Activated CD4-positive, alpha-beta T cell treated with anti-CD3 and anti-CD28 coated beads, Interleukin-2, amount 10 ng/mL, durations not matched to agents 24 days and 14 days (primary cell): ENCODE measurements at regions of chr5 and their contacts with region 1.

Region 1: DNA sequence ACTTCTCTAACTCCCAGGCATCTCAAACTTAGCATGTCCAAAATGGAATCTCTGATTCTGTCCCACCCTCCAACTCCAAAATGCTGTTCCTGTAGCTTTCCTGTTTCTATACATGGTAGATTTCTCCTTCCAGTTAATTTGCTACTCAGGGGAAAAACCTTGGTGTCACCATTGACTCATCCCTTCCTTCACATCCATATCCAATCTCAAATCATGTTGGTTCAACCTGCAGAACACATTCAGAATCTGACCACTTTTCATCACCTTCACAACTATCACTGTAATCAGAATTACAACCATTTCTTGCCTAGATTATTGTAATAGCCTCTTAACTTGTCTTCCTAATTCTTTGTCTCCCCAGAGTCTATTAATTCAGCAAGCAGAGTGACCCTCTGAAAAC is 10.8 kb downstream of the RIOK2 start:
- DNase-seq: no peak
- H3K4me3 Mint-ChIP-seq: no peak overlapping the region
- H3K27ac Mint-ChIP-seq: no peak overlapping the region
- H3K4me1 Mint-ChIP-seq: peaks cover 14% of the 10 kb centered on the region
- H3K27me3 Mint-ChIP-seq: no peaks in the 10 kb centered on the region

Region 2: GRCh38 chr5:96973532-96974401 is 198.5 kb before region 1 on chr5:
- intact Hi-C with region 1: no loop called
- DNase-seq: no peak
- H3K4me3 Mint-ChIP-seq: peak overlapping the region; percentile 7
- H3K27ac Mint-ChIP-seq: peak overlapping the region; percentile 68
- H3K4me1 Mint-ChIP-seq: peaks cover 40% of the 10 kb centered on the region
- H3K27me3 Mint-ChIP-seq: no peaks in the 10 kb centered on the region

Region 3: GRCh38 chr5:97183100-97183929 is 11.1 kb after region 1 on chr5 and contains the start of gene RIOK2:
- intact Hi-C with region 1: loop called (anchors 1 kb)
- DNase-seq: peak; percentile 97
- H3K4me3 Mint-ChIP-seq: peak within 1 kb of the TSS; percentile 89
- H3K27ac Mint-ChIP-seq: peak within 1 kb of the TSS; percentile 100
- H3K4me1 Mint-ChIP-seq: peaks cover 24% of the 10 kb centered on the region
- H3K27me3 Mint-ChIP-seq: peaks cover 4% of the 10 kb centered on the region
- total RNA-seq, gene RIOK2: 40.8 and 42.0 TPM in 2 replicates

Region 4: GRCh38 chr5:98428806-98429205 is 1256.6 kb after region 1 on chr5:
- intact Hi-C with region 1: no loop called
- DNase-seq: peak; percentile 60
- H3K4me3 Mint-ChIP-seq: no peak overlapping the region
- H3K27ac Mint-ChIP-seq: no peak overlapping the region
- H3K4me1 Mint-ChIP-seq: peaks cover 6% of the 10 kb centered on the region
- H3K27me3 Mint-ChIP-seq: peaks cover 6% of the 10 kb centered on the region